Left cardiac atrium (tissue), 4 donors: ENCODE measurements at regions of chr14 and their contacts with region 1.

Region 1: GRCh38 chr14:52950898-52951689 is at the start of gene FERMT2:
- DNase-seq: peak; percentile 91
- ATAC-seq: peak; percentile 93 to 94
- total RNA-seq, gene FERMT2: 113 to 156 TPM

Region 2: GRCh38 chr14:52876311-52876710 is 74.8 kb before region 1 on chr14:
- intact Hi-C with region 1: loop called in 1 of 2 experiments (anchors 5 kb)
- DNase-seq: no peak
- ATAC-seq: no peak

Region 3: GRCh38 chr14:53044486-53044885 is 93.4 kb after region 1 on chr14:
- intact Hi-C with region 1: loop called in 1 of 2 experiments (anchors 5 kb)
- DNase-seq: no peak
- ATAC-seq: peak in 1 of 2 donors; percentile 55